Upper lobe of right lung (tissue), 1 donor: ENCODE measurements at regions of chr15 and their contacts with region 1.

Region 1: DNA sequence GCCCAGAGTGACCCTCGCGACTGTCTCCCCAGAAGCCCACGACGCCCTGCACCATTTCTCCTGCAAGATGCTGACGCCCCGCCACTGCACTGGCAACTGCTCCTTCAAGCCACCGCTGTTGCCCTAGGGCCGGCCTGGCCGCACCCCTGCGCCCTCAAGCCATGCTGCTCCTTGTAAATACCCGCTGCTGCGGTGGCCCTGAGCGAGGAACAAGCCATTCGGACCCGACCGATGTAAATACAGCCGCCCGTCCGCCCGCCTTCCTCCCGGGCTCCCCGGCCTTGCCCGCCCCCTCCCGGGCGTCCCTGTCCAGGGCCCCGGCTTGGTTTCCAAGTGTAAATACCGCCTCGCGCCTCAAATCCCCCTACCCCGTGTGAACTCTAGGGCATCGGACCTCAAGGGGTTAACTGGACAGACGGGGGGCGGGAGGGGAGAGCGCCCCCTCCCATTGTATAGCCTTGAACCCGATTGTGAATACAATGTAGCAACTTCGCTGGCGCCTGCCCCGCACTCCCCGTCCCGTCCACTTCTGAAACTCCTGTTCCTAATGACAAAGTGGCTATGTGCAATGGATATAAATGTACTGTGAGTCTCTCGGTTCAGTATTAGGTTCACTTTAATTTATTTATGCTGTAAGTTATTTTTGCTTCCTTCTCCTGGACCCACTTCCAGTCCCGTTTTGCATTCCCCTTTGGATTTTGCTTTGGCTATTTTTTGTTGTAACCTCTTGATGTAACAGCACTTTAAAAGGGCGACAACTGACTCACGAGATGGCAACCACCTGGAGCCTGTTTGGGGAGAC is 5.9 kb downstream of the RNU6-1 start:
- DNase-seq: no peak
- ATAC-seq: peak; percentile 36
- H3K4me3 ChIP-seq: peak overlapping the region; percentile 45
- H3K27ac ChIP-seq: no peak overlapping the region
- H3K4me1 ChIP-seq: peaks cover 50% of the 10 kb centered on the region
- H3K27me3 ChIP-seq: peaks cover 73% of the 10 kb centered on the region
- CTCF ChIP-seq: peak; percentile 46

Region 2: GRCh38 chr15:67456677-67457529 is 377.0 kb before region 1 on chr15:
- intact Hi-C with region 1: loop called (anchors 5 kb)
- DNase-seq: peak; percentile 90
- ATAC-seq: peak; percentile 97
- H3K4me3 ChIP-seq: no peak overlapping the region
- H3K27ac ChIP-seq: no peak overlapping the region
- H3K4me1 ChIP-seq: no peaks in the 10 kb centered on the region
- H3K27me3 ChIP-seq: no peaks in the 10 kb centered on the region
- CTCF ChIP-seq: peak; percentile 93